ENCODE measurements at regions of chr1 and their contacts with region 1.

Region 1: DNA sequence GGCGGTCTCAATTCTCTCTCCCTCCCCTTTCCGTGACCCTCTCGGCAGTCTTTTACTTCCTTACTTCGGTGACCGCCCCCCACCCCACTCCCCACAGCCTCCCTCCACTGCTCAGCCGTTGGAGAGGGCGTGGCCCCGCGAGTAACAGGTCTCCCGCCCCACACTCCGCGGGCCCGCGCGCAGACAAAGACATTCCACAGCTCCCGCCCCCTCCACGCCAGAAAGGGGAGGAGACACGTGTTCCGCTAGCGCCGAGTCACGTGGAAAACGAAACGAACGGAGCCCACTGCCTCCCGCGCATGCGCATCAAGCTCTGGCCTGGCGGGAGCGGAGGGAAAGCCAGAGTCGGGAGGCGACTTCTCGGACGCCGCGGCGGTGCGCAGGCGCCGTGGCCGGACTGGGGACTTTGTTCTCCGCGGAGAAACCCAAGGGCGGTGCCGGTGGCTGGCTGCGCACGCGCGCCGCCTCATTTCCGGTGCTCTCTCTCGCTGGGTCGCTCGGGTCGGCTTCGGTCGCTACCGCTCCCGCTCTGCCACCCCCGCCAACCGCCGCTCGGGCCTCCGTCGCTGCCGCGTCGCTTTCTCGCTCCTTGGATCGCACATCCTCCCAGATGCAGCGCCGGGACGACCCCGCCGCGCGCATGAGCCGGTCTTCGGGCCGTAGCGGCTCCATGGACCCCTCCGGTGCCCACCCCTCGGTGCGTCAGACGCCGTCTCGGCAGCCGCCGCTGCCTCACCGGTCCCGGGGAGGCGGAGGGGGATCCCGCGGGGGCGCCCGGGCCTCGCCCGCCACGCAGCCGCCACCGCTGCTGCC is at the start of gene KHDRBS1:
- DNase-seq: peak; percentile 99
- H3K4me3 ChIP-seq: peak within 1 kb of the TSS; percentile 99
- H3K27ac ChIP-seq: peak within 1 kb of the TSS; percentile 80 to 95
- H3K4me1 ChIP-seq: peaks cover 8% of the 10 kb centered on the region
- H3K27me3 ChIP-seq: no peaks in the 10 kb centered on the region
- CTCF ChIP-seq: peak in 1 of 3 donors; percentile 23
- EP300 ChIP-seq: no peak
- POLR2A ChIP-seq: peak; percentile 82
- total RNA-seq, gene KHDRBS1: 84.3 to 184 (median 164) TPM

Region 2: GRCh38 chr1:31955917-31956736 is 57.5 kb before region 1 on chr1:
- intact Hi-C with region 1: no loop called
- DNase-seq: peak; percentile 73 to 91 (median 80)
- H3K4me3 ChIP-seq: no peak overlapping the region
- H3K27ac ChIP-seq: peak overlapping the region; percentile 87 to 98
- H3K4me1 ChIP-seq: peaks cover 11% of the 10 kb centered on the region
- H3K27me3 ChIP-seq: no peaks in the 10 kb centered on the region
- CTCF ChIP-seq: peak in 2 of 3 donors; percentile 40 to 42
- EP300 ChIP-seq: peak; percentile 22
- POLR2A ChIP-seq: no peak

Region 3: GRCh38 chr1:32063261-32063681 is 49.7 kb after region 1 on chr1:
- intact Hi-C with region 1: loop called in 1 of 4 experiments (anchors 10 kb)
- DNase-seq: no peak
- H3K4me3 ChIP-seq: no peak overlapping the region
- H3K27ac ChIP-seq: peak overlapping the region in 1 of 2 donors; percentile 39
- H3K4me1 ChIP-seq: peaks cover 12% of the 10 kb centered on the region
- H3K27me3 ChIP-seq: no peaks in the 10 kb centered on the region
- CTCF ChIP-seq: peak; percentile 29 to 79 (median 71)
- EP300 ChIP-seq: no peak
- POLR2A ChIP-seq: no peak

Region 4: GRCh38 chr1:32072622-32073298 is 59.2 kb after region 1 on chr1 and contains the start of gene TMEM39B:
- intact Hi-C with region 1: loop called in 2 of 4 experiments (anchors 10 kb)
- DNase-seq: peak; percentile 93 to 96 (median 94)
- H3K4me3 ChIP-seq: peak within 1 kb of the TSS; percentile 85
- H3K27ac ChIP-seq: peak within 1 kb of the TSS; percentile 83
- H3K4me1 ChIP-seq: no peaks in the 10 kb centered on the region
- H3K27me3 ChIP-seq: no peaks in the 10 kb centered on the region
- CTCF ChIP-seq: peak in 1 of 3 donors; percentile 40
- EP300 ChIP-seq: no peak
- POLR2A ChIP-seq: peak; percentile 24
- total RNA-seq, gene TMEM39B: 3.0 to 23.5 (median 15.2) TPM